A549 (cell line): ENCODE measurements at regions of chr10 and their contacts with region 1.

Region 1: GRCh38 chr10:99732033-99732912 is at the starts of genes COX15 and CUTC:
- DNase-seq: peak; percentile 88 to 97
- ATAC-seq: peak; percentile 88 to 94
- H3K4me3 ChIP-seq: peak within 1 kb of the TSS; percentile 69
- H3K27ac ChIP-seq: peak within 1 kb of the TSS; percentile 89 to 92
- H3K4me1 ChIP-seq: peaks cover 22% of the 10 kb centered on the region
- CTCF ChIP-seq: no peak; the same call in 2 of the 3 replicates
- EP300 ChIP-seq: no peak
- POLR2A ChIP-seq: peak; percentile 65
- RAD21 ChIP-seq: peak; percentile 31 to 37; a peak in 2 of 5 replicates
- polyA plus RNA-seq, gene COX15: 54.4 and 54.7 TPM in 2 replicates
- polyA plus RNA-seq, gene CUTC: 48.3 and 66.5 TPM in 2 replicates

Region 2: DNA sequence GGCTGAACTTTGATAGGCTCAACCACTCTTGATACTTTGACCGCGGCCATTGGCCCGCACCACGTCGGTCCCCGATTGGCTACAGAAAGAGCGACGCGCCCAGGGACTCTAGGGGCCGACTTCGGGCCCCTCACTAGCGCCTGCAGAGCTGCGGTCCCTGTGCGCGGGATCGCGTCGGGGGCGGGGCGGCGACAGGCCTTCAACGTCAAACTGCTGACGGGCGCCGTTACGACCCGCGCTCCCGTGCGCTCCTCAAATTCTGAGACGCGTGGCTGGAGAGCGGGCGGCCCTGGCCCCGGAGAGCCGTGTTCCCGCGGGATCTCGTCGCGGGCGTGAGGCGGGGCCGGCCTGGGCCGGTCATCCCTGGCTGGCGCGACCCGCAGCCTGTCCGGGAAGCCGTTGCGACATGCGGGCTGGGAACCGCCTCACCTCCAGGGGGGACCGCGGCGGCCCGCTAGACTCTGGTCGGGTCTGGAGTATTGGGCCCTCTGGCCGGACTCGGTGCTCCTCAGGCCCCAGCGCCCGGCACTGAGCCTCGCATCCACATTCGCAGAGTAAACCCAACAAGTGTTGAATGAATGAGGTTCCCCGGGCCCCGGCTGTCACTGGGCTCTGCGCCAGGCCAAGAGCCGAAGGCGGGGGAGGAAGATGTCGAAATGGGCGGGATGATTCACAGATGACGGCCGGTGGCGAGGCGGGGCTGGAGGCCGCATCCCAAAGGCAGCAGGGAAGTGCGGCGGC is 111.4 kb before region 1 on chr10:
- CTCF ChIA-PET with region 1: no interaction called
- POLR2A ChIA-PET with region 1: interaction called, 17 read pairs
- DNase-seq: peak; percentile 84 to 96
- ATAC-seq: peak; percentile 89 to 96
- H3K4me3 ChIP-seq: peak overlapping the region; percentile 55
- H3K27ac ChIP-seq: peak overlapping the region; percentile 95
- H3K4me1 ChIP-seq: peaks cover 27% of the 10 kb centered on the region
- CTCF ChIP-seq: no peak
- EP300 ChIP-seq: no peak
- POLR2A ChIP-seq: peak; percentile 85
- RAD21 ChIP-seq: no peak; a peak in 1 of 5 replicates

Region 3: DNA sequence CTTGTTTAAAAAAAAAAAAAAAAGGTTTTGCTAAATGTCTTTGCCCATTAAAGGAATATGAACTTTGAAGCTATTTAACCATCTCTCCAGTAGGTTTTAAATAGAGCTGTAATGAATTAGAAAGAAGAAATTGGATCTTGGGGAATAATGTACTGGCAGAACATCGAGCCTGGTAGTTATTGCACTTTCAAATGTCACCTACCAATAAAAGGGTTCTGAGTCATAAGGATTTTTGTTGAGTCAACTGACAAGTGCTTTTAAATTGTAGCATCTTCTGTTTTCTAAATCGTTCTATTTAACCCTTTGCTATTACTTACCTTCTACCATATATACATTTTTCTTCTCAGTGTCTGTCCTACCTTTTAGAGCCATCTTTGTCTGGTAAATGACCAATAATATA is 10.4 kb after region 1 on chr10:
- CTCF ChIA-PET with region 1: interaction called, 13 read pairs
- POLR2A ChIA-PET with region 1: interaction called, 4 read pairs
- DNase-seq: no peak
- ATAC-seq: no peak
- H3K4me3 ChIP-seq: no peak overlapping the region
- H3K27ac ChIP-seq: no peak overlapping the region
- H3K4me1 ChIP-seq: peaks cover 20% of the 10 kb centered on the region
- CTCF ChIP-seq: no peak
- EP300 ChIP-seq: no peak
- POLR2A ChIP-seq: no peak
- RAD21 ChIP-seq: no peak

Region 4: GRCh38 chr10:99779335-99779734 is 47.1 kb after region 1 on chr10:
- CTCF ChIA-PET with region 1: interaction called, 8 read pairs
- POLR2A ChIA-PET with region 1: interaction called, 25 read pairs
- DNase-seq: peak in 1 of 2 experiments; percentile 82
- ATAC-seq: peak; percentile 58 to 60
- H3K4me3 ChIP-seq: peak overlapping the region; percentile 37
- H3K27ac ChIP-seq: peak overlapping the region; percentile 98 to 100
- H3K4me1 ChIP-seq: peaks cover 66% of the 10 kb centered on the region
- CTCF ChIP-seq: no peak
- EP300 ChIP-seq: no peak
- POLR2A ChIP-seq: no peak
- RAD21 ChIP-seq: no peak

Region 5: DNA sequence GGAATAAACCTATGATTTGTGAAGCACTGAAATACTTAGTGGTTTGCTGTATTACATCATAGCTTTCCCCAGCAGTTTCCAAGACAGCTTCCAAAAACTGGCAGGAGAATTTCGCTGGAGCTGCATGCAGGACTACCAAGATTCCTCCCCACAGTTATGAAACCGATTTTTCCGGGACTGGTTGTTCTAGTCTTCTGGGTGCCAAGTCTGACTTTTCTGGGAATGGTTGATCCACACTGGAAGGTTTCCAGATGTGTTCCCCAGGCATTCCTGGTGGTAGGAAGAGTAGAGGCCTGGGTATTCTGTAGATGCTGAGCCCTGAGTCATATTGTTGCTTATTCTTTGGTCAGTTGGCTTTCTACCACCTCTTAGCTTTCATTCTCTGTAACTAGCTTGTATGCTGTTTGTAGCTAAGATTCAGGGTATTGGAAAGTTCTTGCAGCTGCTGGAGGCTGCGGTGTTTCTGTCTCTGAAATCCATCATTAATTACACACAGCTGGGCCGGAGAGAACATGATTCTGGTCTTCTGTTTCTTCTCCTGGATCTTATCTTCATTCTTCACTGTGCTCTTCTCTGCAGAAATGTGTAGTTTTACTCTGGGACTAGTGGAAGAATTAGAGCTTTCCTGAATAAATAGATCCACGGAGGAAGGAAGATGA is 56.5 kb after region 1 on chr10:
- CTCF ChIA-PET with region 1: interaction called, 21 read pairs
- POLR2A ChIA-PET with region 1: interaction called, 18 read pairs
- DNase-seq: no peak
- ATAC-seq: peak in 1 of 2 experiments; percentile 16; a peak in 2 of 6 replicates
- H3K4me3 ChIP-seq: peak overlapping the region; percentile 34
- H3K27ac ChIP-seq: peak overlapping the region; percentile 98 to 100
- H3K4me1 ChIP-seq: peaks cover 87% of the 10 kb centered on the region
- CTCF ChIP-seq: no peak
- EP300 ChIP-seq: no peak
- POLR2A ChIP-seq: no peak
- RAD21 ChIP-seq: no peak

Region 6: GRCh38 chr10:99799613-99800012 is 67.3 kb after region 1 on chr10:
- CTCF ChIA-PET with region 1: interaction called, 6 read pairs
- POLR2A ChIA-PET with region 1: interaction called, 14 read pairs
- DNase-seq: no peak
- ATAC-seq: peak; percentile 17 to 51; a peak in 4 of 6 replicates
- H3K4me3 ChIP-seq: no peak overlapping the region
- H3K27ac ChIP-seq: no peak overlapping the region
- H3K4me1 ChIP-seq: 0 out of 3 replicates have a peak, but pooled peaks cover 5% of the 10 kb centered on the region
- CTCF ChIP-seq: no peak
- EP300 ChIP-seq: no peak
- POLR2A ChIP-seq: no peak
- RAD21 ChIP-seq: no peak